K562 (cell line): ENCODE measurements at regions of chr15 and their contacts with region 1.

Region 1: GRCh38 chr15:72199711-72200212 is 2.2 kb upstream of the GRAMD2A start:
- DNase-seq: peak; percentile 71 to 75 (median 74)
- ATAC-seq: peak; percentile 90
- H3K4me3 ChIP-seq: no peak overlapping the region
- H3K27ac ChIP-seq: no peak overlapping the region
- H3K4me1 ChIP-seq: peaks cover 5 to 13% of the 10 kb centered on the region in 2 experiments; a peak in 4 of 5 replicates
- H3K27me3 ChIP-seq: no peaks in the 10 kb centered on the region
- CTCF ChIP-seq: peak; percentile 84 to 86 (median 85)
- EP300 ChIP-seq: no peak
- POLR2A ChIP-seq: no peak
- RAD21 ChIP-seq: peak; percentile 57 to 90

Region 2: DNA sequence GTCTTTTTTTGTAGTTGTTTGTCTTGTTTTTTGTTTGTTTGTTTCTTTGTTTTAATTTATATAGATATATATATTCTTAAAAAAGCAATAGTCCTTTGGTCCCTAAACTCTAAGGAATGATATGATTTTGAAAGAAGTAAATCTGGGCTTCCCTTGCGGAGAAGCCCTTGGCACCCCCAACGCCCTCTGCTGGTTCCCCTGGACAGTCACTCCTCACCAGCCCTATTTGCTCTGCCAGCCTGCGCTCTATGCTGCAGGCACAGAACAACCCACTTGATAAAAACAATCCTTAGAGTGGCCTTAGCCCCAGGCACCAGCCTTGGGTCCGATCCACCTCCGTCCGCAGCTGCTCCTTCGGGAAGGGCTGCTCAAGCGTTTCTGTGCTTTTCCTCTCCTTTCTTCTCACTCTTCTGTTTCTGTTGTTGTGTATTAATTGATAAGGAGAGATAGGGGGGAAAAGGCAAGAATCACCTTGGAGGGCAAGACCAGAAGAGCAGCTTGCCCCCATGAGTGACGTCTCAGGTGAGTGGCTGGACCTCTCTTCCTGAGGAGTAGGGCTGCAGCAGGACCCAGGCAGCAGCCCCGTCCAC is 86.3 kb after region 1 on chr15:
- CTCF ChIA-PET with region 1: interaction called, 4 read pairs
- POLR2A ChIA-PET with region 1: interaction called, 3 read pairs
- in situ Hi-C with region 1: no loop called
- intact Hi-C with region 1: loop called (anchors 1 kb)
- DNase-seq: peak; percentile 64 to 72 (median 68)
- ATAC-seq: peak; percentile 88
- H3K4me3 ChIP-seq: no peak overlapping the region
- H3K27ac ChIP-seq: no peak overlapping the region
- H3K4me1 ChIP-seq: peaks cover 3 to 18% of the 10 kb centered on the region in 2 experiments; a peak in 4 of 5 replicates
- H3K27me3 ChIP-seq: peaks cover 24 to 48% of the 10 kb centered on the region in 2 experiments; a peak in 4 of 5 replicates
- CTCF ChIP-seq: peak; percentile 73 to 79 (median 74)
- EP300 ChIP-seq: no peak
- POLR2A ChIP-seq: no peak
- RAD21 ChIP-seq: peak; percentile 41 to 62